Activated T-helper 2 cell treated with anti-CD3 and anti-CD28 coated beads, Interferon-gamma antibody, Interleukin-2, Interleukin-4, amounts not matched to agents 10 μg/mL and 5 μg/mL and 100 μg/mL, durations not matched to agents 14 hours and 24 hours and 36 hours (primary cell): ENCODE measurements at regions of chr2 and their contacts with region 1.

Region 1: DNA sequence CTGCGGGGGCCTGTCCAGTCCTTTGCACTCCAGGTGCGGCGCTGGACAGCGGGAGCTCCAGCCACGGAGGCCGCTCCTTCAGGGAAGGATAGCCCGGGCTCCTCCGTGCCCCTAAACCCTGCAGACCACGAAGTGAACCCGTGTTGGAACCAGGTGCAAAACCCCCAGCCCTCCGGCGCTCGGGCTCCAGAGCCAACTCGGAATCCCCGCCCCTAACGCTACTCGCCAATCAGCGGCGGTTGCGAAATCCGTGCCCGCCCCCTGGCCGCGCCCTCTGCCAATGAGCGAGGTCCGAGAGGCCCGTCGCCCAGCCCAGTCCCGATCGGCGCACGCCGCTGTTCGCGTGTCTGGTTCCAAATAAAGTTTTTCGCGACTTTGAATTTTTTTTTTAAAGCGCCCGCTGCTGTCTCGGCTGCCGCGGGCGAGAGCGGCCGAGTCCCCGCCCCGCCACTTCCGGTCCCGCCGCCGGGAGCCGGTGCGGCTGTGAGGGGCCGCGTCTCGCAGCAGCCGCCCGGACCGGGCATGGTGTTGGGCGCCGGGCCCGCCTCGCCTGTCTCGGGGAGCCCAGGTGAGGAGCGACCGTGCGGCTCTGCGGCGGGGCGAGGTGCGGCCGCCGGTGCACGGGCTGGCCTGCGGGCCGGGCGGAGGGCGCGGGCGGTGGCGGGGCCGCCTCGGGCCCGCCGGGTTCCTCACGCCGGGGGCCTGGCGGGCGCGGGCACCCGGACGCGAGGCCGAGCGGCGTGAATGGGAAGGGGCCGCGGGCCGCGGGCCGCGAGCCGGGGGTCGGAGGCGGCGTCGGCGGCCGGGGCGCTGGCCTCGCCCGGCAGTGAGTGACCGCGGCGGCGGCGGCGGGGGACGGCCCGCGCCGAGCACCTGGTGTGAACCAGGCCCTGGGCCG is at the start of gene UBE2F:
- DNase-seq: peak; percentile 97
- H3K4me3 Mint-ChIP-seq: peak within 1 kb of the TSS; percentile 89
- H3K27ac Mint-ChIP-seq: peak within 1 kb of the TSS; percentile 78
- H3K4me1 Mint-ChIP-seq: peaks cover 34% of the 10 kb centered on the region
- H3K27me3 Mint-ChIP-seq: no peaks in the 10 kb centered on the region
- total RNA-seq, gene UBE2F: 137 and 146 TPM in 2 replicates

Region 2: DNA sequence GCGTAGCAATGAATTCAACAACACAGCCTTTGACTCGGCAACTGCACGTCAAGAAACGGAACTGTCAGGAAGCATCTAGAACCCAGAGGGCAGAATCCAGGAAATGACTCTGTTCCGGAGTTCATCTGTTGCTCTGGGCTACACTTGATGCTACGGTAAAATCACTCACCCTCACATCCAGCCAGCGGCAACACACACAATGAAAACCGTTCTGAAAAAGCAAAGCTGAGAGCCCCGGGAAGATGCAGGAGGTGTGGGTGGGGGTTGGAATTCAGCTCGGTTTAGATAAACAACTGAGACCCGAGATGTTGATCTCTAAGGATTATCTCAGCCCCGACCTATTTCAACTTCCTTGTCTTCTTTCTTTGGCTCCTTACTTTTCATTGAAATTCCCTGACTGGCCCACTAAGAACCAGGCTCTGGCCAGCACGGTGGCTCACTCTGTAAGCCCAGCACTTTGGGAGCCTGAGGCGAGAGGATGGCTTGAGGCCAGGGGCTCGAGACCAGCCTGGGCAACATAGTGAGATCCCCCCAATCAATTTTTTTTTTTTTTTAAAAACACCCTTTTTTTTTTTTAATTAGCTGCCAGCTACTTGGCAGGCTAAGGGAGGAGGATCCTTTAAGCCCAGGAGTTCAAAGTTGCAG is 363.0 kb before region 1 on chr2:
- intact Hi-C with region 1: no loop called
- DNase-seq: peak; percentile 54
- H3K4me3 Mint-ChIP-seq: no peak overlapping the region
- H3K27ac Mint-ChIP-seq: peak overlapping the region; percentile 36
- H3K4me1 Mint-ChIP-seq: peaks cover 15% of the 10 kb centered on the region
- H3K27me3 Mint-ChIP-seq: peaks cover 8% of the 10 kb centered on the region

Region 3: GRCh38 chr2:237700512-237701032 is 266.2 kb before region 1 on chr2:
- intact Hi-C with region 1: loop called (anchors 2 kb)
- DNase-seq: peak; percentile 63
- H3K4me3 Mint-ChIP-seq: peak overlapping the region; percentile 80
- H3K27ac Mint-ChIP-seq: peak overlapping the region; percentile 96
- H3K4me1 Mint-ChIP-seq: peaks cover 87% of the 10 kb centered on the region
- H3K27me3 Mint-ChIP-seq: no peaks in the 10 kb centered on the region

Region 4: GRCh38 chr2:237923481-237924163 is 43.2 kb before region 1 on chr2:
- intact Hi-C with region 1: loop called (anchors 5 kb)
- DNase-seq: peak; percentile 74
- H3K4me3 Mint-ChIP-seq: peak overlapping the region; percentile 33
- H3K27ac Mint-ChIP-seq: peak overlapping the region; percentile 74
- H3K4me1 Mint-ChIP-seq: peaks cover 17% of the 10 kb centered on the region
- H3K27me3 Mint-ChIP-seq: no peaks in the 10 kb centered on the region

Region 5: DNA sequence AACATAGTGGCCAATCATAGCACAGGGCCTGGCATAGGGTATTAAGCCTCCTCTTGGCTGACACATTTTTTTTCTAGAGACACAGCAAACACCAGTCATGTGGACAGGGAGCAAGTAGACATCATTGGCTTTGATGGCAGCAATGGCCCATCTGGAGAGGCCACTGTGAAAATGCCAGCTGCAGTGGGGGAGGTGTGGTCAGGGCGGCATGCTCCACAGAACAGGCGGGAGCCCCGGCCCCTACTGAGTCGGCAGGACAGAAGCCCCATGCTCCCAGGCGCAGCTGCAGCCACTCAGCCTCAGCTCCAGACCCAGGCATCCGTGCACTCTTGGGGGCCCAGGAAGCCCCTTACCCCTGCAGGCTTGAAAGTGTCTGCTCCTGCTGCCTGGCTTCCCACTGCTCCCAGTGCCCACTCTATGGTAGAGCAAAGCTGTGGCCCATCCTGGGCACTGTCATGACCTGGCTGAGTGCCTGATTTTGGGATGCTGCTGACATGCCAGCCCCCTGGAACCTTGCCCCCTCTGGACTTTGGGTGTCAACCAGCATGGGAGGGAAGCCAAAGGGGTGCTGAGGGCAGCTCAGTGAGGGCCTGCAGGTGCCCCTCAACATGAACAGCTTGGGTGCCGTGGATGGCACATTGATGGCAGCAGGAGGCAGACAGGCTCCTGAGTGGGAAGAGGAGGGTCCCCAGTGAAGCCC is 23.3 kb before region 1 on chr2:
- intact Hi-C with region 1: no loop called
- DNase-seq: no peak
- H3K4me3 Mint-ChIP-seq: no peak overlapping the region
- H3K27ac Mint-ChIP-seq: no peak overlapping the region
- H3K4me1 Mint-ChIP-seq: peaks cover 46% of the 10 kb centered on the region
- H3K27me3 Mint-ChIP-seq: no peaks in the 10 kb centered on the region

Region 6: DNA sequence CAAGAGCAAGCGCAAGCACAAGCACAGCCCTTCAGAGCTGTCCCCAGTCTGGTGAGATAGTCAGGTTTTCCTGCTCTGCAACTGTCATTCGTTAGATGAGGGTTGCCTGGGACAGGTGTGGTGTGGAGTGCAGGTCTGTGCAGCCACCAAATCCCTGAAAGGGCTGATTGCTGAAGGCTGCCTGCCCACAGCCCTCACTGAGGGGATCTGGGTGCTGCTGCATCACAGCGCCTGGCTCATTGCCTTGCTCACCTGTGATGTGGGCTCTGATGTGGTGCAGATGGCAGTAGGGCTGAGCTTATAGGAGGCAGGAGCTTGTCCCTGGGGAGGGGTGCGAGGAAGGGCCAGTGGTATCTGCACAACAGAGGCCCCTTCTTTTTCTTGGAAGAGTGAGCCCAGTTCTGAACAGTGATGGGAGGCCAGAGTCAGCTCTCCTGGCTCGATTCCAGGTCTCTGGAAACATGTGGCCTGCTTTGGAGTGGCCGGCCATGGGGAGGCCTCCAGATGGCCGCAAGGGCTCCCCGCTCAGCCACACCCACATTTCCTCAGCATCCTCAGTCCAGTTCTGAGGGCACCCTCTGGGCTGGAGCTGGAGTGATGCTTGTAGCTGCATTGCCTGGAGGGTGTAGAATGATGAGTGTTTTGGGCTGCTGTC is 11.4 kb after region 1 on chr2:
- intact Hi-C with region 1: no loop called
- DNase-seq: no peak
- H3K4me3 Mint-ChIP-seq: peak overlapping the region; percentile 7
- H3K27ac Mint-ChIP-seq: peak overlapping the region; percentile 61
- H3K4me1 Mint-ChIP-seq: peaks cover 56% of the 10 kb centered on the region
- H3K27me3 Mint-ChIP-seq: no peaks in the 10 kb centered on the region

Region 7: GRCh38 chr2:238009563-238009962 is 42.7 kb after region 1 on chr2:
- intact Hi-C with region 1: no loop called
- DNase-seq: no peak
- H3K4me3 Mint-ChIP-seq: peak overlapping the region; percentile 78
- H3K27ac Mint-ChIP-seq: peak overlapping the region; percentile 99
- H3K4me1 Mint-ChIP-seq: peaks cover 59% of the 10 kb centered on the region
- H3K27me3 Mint-ChIP-seq: no peaks in the 10 kb centered on the region

Region 8: DNA sequence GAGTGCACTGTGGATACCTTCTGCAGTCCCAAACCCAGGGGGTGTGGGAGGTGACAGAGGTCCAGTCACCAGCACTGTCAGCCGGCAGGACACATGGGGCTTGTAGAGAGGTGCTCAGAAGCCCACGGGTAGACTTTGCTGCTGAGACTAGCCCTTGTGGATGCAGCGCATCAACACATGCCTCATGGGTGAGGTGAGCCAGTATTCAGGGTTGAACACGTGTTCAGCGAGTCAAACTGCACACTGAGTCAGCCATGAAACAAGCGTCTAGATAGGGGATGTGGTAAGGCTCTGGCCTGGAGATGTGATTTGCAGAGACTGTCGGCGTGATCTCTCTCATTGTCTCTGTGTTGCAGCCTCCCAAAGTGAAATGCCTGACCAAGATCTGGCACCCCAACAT is 58.2 kb after region 1 on chr2:
- intact Hi-C with region 1: loop called (anchors 1 kb)
- DNase-seq: peak; percentile 33
- H3K4me3 Mint-ChIP-seq: peak overlapping the region; percentile 66
- H3K27ac Mint-ChIP-seq: peak overlapping the region; percentile 86
- H3K4me1 Mint-ChIP-seq: peaks cover 38% of the 10 kb centered on the region
- H3K27me3 Mint-ChIP-seq: no peaks in the 10 kb centered on the region

Region 9: DNA sequence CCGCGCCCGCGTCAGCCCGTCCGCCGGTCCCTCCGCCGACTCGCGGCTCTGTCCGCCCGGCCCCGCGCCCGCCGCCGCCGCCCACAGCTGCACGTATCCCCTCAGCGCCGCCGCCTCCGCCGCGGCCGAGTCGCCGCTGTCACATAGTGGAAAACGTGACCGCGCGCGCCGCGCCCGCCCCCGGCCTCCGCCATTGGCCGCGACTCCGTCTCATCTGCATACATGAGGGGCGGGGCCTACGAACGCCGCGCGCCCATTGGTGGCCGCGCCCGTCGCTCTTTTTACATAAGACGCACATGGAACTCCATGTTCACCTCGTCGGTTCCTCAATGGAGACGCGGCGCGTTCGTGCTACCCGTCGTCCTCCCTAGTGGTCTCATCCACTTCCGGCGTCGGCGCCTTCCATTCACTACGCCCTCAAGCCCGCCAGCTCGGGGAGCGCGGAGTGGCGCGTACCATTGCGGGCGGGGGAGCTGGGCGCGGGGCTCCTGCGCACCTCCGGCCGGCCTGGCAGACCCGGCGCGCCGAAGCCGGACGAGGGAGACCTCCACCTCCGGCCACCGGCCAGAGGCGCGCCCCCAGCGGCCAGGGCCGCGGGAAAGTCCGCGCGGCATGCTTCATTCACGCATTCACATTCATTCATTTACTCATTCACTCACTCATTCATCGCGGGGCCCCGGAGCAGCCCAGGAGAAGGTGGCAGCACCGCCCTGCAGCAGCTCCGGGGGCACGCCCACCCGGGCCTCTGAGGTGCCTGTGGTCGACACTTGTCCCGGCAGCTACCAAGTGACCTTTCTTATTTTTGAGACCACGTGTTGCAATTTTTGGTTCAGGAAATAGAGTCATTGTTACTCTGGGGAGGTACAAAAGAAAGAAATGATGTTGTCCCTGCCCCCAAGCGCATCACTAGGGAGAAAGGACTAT is 322.1 kb after region 1 on chr2:
- intact Hi-C with region 1: loop called (anchors 10 kb)
- DNase-seq: peak; percentile 98
- H3K4me3 Mint-ChIP-seq: peak overlapping the region; percentile 90
- H3K27ac Mint-ChIP-seq: peak overlapping the region; percentile 94
- H3K4me1 Mint-ChIP-seq: peaks cover 31% of the 10 kb centered on the region
- H3K27me3 Mint-ChIP-seq: no peaks in the 10 kb centered on the region